ENCODE measurements at regions of chr4 and their contacts with region 1.

Region 1: DNA sequence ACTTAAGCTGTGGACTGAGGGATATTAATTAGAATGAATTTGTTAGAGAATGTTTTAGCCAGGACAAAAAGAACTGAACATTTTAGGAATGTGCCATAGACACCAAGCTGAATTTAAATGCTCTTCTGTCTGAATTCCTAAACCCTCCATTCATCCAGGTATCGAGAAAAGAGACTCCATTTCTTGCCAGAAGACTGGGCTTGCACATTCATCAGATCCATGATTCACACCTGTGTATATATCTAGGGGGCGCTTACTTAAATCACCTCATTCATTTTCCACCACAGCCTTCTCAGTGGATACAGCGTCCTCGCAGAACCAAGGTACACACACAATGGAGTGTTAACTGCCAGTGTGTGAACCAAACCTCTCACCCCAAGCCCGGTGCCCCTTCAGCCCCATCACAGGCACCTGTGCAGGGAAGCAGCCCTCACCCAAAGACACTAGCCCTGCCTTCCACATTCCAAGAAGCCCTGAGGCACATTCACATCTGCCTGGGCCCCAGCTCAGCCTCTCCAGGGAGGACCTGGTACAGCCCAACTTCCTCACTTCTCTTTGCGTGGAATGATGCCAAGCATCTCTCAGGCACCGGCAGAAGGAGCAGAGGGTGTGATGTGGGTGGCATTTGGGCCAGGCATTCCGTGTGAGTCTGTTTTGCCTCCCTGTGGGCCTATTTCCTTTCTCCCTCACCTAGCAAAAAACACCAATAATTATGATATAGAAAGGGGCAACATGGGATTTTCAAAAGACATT is 35.6 kb upstream of the C1QTNF7 start:
- DNase-seq: no peak
- H3K4me3 ChIP-seq: no peak overlapping the region
- H3K27ac ChIP-seq: no peak overlapping the region
- H3K4me1 ChIP-seq: peaks cover 0 to 9% (median 3%) of the 10 kb centered on the region in 6 donors
- H3K27me3 ChIP-seq: no peaks in the 10 kb centered on the region
- CTCF ChIP-seq: no peak
- POLR2A ChIP-seq: no peak

Region 2: DNA sequence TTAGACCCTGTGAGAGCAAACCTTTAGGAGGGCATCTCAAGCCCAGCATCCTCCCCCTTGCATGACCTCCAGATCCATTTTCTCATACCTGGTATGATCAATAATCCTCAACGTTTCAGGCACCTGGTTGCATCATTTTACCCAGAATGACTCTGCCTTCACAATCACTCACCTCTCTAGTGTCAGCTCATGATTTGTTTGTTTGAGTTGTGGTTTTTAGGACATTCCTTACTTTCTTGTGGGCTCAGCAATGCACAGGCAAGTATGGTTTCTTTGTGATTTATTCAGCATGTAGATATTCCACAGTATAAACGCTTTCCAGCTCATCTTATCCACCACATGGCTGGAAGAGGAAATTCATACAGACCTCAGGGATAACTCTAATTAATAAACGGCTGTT is 483.6 kb before region 1 on chr4:
- intact Hi-C with region 1: no loop called
- DNase-seq: no peak
- H3K4me3 ChIP-seq: no peak overlapping the region
- H3K27ac ChIP-seq: no peak overlapping the region
- H3K4me1 ChIP-seq: peaks cover 0 to 8% (median 0%) of the 10 kb centered on the region in 6 donors
- H3K27me3 ChIP-seq: no peaks in the 10 kb centered on the region
- CTCF ChIP-seq: no peak
- POLR2A ChIP-seq: no peak

Region 3: DNA sequence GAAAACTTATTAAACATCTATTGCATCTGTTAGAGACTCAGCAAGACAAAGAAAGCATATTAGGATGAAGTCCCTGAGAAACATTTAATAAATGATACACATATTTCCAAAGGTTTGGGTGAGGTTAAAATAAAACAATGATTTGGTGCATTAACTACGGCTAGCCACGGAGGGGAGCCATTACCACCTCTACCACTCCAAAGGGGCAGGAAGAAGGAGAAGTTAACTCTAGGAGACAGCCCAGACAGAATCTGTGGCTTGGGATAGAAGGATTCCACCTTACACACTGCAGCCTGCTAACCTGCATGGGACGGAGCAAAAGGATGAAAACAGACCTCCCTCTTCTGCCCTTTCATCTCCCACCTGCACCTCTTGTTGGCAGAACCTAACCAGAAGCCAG is 153.5 kb before region 1 on chr4:
- intact Hi-C with region 1: loop called (anchors 5 kb)
- DNase-seq: no peak
- H3K4me3 ChIP-seq: no peak overlapping the region
- H3K27ac ChIP-seq: peak overlapping the region in 2 of 8 donors; percentile 2 to 8
- H3K4me1 ChIP-seq: peaks cover 6 to 23% (median 11%) of the 10 kb centered on the region in 6 donors
- H3K27me3 ChIP-seq: no peaks in the 10 kb centered on the region
- CTCF ChIP-seq: peak in 9 of 11 experiments; percentile 40 to 71 (median 60)
- POLR2A ChIP-seq: no peak